ENCODE measurements at regions of chr5 and their contacts with region 1.

Region 1: DNA sequence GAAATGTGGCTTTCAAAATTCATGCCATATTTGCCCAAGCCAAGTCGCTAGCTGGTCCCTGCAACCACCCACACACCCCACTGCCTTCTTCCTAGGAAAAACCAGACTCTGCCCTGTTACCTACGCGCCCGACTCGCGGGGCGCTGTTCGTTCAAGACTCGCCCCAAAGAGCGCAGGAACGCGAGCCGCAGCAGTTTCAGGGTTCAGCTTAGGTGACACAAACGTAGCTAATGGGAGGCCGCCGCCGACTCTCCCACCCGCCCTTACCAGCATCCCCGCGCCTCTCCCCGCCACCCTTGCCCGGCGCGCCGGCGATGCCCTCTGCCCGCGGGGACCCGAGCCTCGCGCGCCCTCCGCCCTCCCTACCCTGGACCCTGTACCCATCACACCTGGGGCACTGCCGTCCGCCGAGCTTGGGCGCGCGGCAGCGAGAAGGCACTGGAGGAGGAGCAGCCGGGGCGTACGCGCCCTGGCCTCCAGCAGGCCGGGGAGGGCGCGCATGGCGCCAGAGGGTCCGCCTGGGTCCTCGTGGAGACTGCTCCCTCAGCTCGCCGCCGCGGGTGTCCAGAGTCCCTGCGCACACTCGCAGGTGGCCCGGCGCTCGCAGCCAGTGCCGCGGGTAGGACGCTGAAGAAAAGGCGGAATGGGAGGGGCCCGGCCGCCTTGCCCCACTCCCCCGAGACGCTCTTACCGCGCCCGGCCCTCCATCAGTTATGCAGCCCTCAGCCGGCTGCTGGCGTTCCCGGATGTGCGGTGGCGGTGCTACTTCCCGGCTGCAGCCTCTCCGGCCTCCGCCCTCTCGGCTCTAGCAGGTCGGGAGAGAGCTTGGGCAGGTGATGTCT is at the start of gene EMB:
- DNase-seq: peak; percentile 72
- H3K4me3 Mint-ChIP-seq: peak within 1 kb of the TSS; percentile 94
- H3K27ac Mint-ChIP-seq: peak within 1 kb of the TSS; percentile 97
- H3K4me1 Mint-ChIP-seq: peaks cover 65% of the 10 kb centered on the region
- H3K27me3 Mint-ChIP-seq: peaks cover 2% of the 10 kb centered on the region
- total RNA-seq, gene EMB: 80.6 and 81.8 TPM in 2 replicates

Region 2: DNA sequence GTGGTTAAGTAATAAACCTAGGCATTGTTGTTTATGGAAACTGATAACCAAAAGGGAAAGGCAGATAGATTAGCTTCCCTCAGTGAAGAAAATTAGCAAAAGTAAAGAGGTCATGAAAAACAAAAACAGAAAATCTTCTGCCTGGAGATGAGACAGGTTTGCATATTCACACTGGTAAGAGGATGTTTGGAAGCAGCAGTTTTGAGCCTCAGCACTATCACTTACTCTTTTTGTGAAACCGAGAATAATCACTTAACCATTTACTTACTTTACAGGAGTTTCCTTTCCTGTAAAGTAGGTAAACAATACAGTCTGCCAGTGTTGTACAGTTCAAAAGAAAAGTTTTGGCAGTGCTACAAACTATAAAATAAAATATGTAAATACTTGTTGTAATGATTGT is 35.7 kb after region 1 on chr5:
- intact Hi-C with region 1: loop called (anchors 2 kb)
- DNase-seq: no peak
- H3K4me3 Mint-ChIP-seq: peak overlapping the region; percentile 15
- H3K27ac Mint-ChIP-seq: no peak overlapping the region
- H3K4me1 Mint-ChIP-seq: peaks cover 34% of the 10 kb centered on the region
- H3K27me3 Mint-ChIP-seq: no peaks in the 10 kb centered on the region

Region 3: DNA sequence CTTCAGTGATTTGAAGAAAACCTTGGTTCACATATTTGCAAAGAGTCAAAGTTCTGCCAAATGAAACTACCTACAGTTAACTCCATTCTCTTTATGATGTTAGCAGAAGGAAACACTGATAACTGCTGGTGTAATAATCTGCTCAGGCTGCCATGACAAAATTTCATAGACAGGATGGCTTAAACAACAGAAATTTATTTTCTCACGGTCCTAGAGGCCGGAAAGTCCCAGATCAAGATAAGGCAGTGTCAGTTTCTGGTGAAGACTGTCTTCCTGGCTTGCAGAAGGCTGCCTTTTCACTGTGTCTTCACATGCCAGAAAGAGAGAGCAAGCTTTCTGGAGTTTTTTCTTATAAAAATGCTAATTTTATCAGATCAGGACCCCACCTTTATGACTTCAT is 123.2 kb after region 1 on chr5:
- intact Hi-C with region 1: loop called (anchors 2 kb)
- DNase-seq: peak; percentile 39
- H3K4me3 Mint-ChIP-seq: peak overlapping the region; percentile 23
- H3K27ac Mint-ChIP-seq: peak overlapping the region; percentile 31
- H3K4me1 Mint-ChIP-seq: peaks cover 43% of the 10 kb centered on the region
- H3K27me3 Mint-ChIP-seq: peaks cover 2% of the 10 kb centered on the region

Region 4: DNA sequence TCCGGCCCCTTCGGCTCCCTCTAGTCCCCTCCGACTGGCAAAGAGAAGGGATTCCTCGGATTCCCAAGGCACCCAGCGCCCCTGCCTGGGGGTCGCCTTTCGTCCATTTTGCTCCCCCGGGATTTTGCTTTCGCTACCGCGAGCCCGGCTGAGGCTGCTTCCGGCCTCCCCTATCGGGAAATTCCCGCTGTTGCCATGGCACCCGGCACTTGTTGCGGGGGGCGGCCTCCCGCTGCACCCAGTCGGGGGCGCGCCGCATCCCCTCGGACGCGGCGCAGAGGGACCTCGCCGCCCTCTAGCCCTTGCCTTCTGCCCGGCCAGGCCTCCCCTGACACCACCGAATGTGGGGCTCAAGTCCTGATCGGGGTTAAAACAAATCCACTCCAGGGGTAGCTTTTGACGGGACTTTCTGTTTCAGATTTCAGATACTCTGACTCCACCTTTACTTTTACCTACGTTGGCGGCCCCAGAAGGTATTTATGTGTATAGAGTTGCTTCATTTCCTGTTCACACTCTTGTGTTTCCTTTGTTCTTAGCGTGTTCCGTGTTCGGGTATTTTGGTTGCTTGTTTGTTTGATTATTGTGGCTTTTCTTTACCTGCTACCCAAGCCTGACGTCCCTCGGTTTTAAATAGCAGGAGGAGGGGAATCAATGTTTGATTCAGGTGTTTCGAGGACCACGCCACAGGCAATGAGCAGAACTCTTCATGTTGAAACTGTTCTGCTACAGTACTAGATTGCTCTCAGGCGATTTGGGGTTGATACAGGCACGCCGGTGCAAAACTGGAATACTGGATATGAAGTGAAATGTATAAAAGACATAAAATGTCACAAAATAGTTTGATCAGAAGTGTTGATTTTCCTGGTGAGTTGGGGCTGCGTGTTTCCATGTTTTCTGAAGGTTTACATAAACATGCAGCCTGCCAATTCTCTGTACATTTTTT is 227.1 kb after region 1 on chr5:
- intact Hi-C with region 1: loop called (anchors 2 kb)
- DNase-seq: peak; percentile 83
- H3K4me3 Mint-ChIP-seq: peak overlapping the region; percentile 94
- H3K27ac Mint-ChIP-seq: peak overlapping the region; percentile 99
- H3K4me1 Mint-ChIP-seq: peaks cover 59% of the 10 kb centered on the region
- H3K27me3 Mint-ChIP-seq: no peaks in the 10 kb centered on the region

Measured in activated T-helper 1 cell treated with anti-CD3 and anti-CD28 coated beads, Interleukin-12 subunit alpha, Interleukin-12 subunit beta, Interleukin-2, Interleukin-4 antibody, amounts not matched to agents 30 ng/mL and 10 ng/mL and 1 ng/mL, durations not matched to agents 14 hours and 24 hours and 36 hours (primary cell).